Right lobe of liver (tissue), 6 donors: ENCODE measurements at regions of chr12 and their contacts with region 1.

Region 1: DNA sequence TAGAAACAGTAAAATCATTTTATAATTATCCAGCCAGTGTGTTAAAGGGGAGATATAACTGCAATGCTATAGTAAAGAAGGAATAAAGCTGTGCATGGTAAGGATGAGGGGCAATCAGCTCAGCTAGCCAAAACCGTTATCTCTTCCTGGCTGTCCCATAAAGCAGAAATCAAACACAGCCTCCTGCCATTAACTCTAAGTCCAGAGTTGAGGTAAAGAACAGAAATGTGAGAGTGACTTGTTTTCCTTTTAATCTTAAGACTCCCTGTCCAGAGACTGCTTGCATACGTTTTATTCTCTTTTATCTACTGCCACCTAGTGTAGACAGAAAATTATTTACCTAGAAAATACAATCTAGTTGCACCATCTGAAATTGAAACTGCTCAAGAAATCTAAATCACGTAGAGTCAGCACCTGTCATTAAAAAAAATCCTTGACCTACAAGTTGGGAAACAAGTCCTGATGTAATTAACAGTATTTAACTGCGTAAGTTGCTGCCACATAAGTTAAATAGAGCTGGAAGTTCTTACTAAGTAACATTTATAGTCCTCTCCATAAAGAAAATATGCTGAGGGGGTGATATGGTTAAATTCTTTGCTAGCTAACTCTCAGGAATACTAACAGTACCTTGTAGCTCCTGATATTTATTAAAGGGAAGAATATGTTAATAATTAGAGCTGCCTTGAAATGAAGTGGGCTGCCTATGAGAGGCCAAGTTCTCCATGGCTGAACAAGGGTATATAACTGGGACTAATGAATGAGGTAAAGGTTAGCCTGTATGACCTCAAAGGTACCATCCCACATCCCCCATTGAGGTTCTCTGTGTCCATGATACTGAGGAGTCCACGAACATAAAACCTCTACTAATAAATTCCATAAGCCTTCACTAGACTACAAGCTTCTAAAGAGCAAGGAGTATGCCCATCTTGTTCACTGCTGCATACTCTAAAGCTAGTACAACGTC is 62.7 kb downstream of the GALNT4 start:
- DNase-seq: no peak
- ATAC-seq: peak; percentile 93 to 97 (median 96)
- H3K4me3 ChIP-seq: peak overlapping the region in 1 of 3 donors; percentile 17
- H3K27ac ChIP-seq: peak overlapping the region; percentile 29 to 66 (median 31)
- H3K4me1 ChIP-seq: peaks cover 0 to 4% (median 0%) of the 10 kb centered on the region in 4 donors
- H3K27me3 ChIP-seq: no peaks in the 10 kb centered on the region
- CTCF ChIP-seq: peak; percentile 59 to 86 (median 64)
- POLR2A ChIP-seq: no peak

Region 2: DNA sequence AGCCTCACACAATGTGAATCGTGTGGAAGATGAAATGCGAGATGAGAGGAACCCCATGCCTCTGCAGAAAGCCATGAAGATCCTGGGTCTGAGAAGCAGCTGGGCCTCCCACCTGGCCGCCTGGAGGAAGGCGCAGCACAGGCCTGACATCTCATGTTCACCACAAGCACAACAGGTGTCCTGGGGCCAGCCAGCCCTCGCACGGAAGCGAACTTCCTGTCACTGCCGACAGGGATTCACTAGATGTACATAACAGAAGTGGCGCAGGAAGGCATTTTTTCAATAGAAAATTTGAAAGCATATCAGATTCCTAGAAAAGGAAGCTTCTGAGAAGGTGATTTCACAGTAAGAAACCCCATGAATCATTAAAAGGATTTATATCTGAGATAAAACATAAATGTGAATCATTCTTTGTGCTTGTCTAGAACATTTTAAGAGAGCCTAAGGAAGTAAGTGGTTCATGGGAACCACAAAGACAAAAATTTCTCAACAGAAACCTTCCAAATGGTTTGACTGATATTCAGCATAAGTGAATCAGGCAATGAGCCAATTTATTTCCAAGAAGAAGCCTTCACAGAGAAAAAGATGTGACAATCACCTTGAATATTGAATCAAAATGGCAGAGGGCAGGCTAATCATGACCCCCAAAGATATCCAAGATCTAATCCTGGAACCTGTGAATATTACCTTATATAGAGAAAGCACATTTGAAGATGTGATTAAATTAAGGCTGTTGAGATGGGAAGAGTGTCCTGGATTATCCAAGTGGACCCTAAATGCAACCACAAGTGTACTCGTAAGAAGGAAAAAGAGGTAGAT is 421.6 kb before region 1 on chr12:
- intact Hi-C with region 1: loop called in 1 of 2 experiments (anchors 10 kb)
- DNase-seq: peak in 1 of 3 donors; percentile 24
- ATAC-seq: no peak
- H3K4me3 ChIP-seq: no peak overlapping the region
- H3K27ac ChIP-seq: no peak overlapping the region
- H3K4me1 ChIP-seq: no peaks in the 10 kb centered on the region
- H3K27me3 ChIP-seq: no peaks in the 10 kb centered on the region
- CTCF ChIP-seq: no peak
- POLR2A ChIP-seq: no peak